Lower leg skin (tissue), 4 donors: ENCODE measurements at regions of chr9 and their contacts with region 1.

Region 1: DNA sequence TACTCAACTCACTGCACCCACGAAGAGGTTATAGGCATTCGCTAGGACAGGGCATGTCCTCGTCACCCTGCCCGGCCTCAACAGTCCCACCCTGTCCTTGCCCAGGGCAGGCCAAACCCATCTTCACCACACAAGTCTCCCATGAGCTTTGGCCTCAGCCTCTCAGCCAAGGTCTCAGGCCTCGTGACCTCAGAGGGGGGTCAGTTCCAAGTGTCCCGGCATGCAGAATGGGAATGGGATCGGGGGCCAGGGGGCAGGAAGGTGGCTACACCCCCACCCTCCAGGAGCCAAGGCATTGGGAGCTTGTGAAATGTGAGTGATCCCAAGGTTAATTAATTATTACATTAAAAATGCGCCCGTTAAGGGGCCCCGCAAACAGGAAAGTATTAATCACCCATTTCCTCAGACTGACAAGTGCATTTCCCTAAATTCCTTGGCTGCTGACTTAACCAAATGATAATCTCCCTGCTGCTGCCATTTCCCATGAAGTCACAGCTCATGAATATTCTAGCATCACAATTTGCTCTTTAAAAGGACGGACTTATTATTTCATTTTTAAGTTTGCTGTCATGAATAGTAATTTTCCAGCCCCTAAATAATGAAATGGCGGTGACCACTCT is 8.0 kb upstream of the UBAC1 start:
- DNase-seq: no peak
- H3K4me3 ChIP-seq: no peak overlapping the region
- CTCF ChIP-seq: no peak
- POLR2A ChIP-seq: no peak

Region 2: DNA sequence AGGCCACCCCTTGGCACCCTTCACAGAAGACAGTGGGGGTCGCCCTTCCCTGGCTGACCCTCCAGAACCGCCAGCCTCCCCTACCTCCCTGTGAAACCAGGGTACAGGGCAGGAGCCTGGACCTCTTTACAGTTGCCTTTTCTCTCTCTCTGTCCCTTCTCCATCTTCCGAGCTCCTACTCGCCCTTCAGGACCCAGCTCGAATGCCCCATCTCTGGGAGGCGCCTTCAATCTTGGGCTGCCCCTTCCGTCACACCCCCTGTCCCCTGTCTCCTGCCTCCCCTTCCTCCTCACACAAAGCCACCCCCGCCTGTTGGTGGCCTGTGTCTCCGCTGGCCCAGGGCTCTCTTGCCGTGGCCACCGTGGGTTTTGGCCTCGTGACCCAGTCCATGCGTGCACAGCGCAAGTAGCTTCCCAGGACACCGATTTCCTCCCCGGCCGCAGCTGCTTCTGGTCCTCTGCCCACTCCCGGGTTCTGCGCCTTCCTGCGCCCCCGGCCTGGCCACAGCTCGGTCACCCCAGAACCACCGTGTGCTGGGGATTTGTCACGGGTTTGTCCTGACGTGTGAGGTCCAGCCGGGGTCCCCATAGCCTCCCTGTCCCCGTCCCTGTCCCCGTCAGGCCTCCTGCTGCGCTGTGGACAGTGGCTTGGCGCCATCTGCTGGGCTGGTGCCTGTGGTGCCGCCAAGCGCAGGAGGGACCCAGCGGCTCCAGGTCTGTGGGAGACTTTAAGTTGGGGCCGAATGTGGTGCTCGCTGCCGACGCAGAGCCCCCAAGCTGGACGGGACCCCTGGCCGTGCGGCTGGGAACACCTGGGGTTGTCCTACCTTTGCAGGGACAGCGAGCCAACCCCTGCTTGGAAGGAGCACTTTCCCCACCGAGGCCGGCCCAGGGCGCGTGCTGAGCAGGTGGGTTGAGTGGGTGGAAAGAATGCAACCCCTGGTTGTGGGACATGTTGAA is 153.5 kb after region 1 on chr9:
- intact Hi-C with region 1: loop called (anchors 2 kb)
- DNase-seq: peak; percentile 66 to 95
- H3K4me3 ChIP-seq: no peak overlapping the region
- CTCF ChIP-seq: peak in 1 of 3 donors; percentile 88
- POLR2A ChIP-seq: no peak